Mammary epithelial cell (primary cell): ENCODE measurements at regions of chr2 and their contacts with region 1.

Region 1: GRCh38 chr2:40760071-40760666 is 308.3 kb upstream of the SLC8A1 start:
- DNase-seq: peak; percentile 39
- H3K4me3 ChIP-seq: no peak overlapping the region
- H3K27ac ChIP-seq: no peak overlapping the region
- H3K4me1 ChIP-seq: peaks cover 7% of the 10 kb centered on the region
- H3K27me3 ChIP-seq: no peaks in the 10 kb centered on the region
- CTCF ChIP-seq: peak; percentile 97 to 99

Region 2: GRCh38 chr2:40168041-40168442 is 592.1 kb before region 1 on chr2:
- CTCF ChIA-PET with region 1: no interaction called
- dilution Hi-C with region 1: no loop called
- in situ Hi-C with region 1: no loop called
- intact Hi-C with region 1: no loop called
- DNase-seq: no peak
- H3K4me3 ChIP-seq: no peak overlapping the region
- H3K27ac ChIP-seq: no peak overlapping the region
- H3K4me1 ChIP-seq: no peaks in the 10 kb centered on the region
- H3K27me3 ChIP-seq: no peaks in the 10 kb centered on the region
- CTCF ChIP-seq: no peak

Region 3: DNA sequence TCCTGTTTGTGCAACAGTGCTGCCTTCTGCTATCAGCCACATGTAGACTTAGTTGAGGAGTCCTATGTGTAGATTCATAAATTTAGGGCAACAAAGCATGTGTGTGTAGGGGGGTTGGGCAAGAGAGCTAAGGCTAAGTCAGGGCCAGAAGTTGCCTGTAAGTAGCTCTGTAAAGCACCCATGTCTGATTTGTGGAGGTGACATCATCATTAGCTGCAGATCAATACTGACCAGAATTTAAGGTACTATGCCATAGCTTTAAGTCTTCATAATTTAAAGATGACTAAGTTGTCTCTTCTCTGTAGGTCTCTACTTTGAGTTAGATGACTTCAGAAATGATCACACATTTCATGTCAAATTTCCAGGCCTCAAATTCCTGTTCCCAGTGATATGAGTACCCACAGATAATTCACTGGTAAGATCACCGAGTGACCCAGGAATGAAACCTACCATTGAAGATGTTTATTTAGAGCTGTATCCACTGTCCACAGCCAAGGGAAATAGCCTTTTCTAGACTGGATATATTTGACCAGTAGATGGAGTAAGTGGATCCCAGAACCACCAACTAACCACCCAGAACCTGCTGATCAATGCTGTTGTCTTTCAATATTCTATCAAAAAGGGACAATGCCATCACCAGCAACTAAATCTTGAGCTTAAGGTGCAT is 547.2 kb before region 1 on chr2:
- CTCF ChIA-PET with region 1: no interaction called
- dilution Hi-C with region 1: no loop called
- in situ Hi-C with region 1: loop called in 1 of 2 experiments (anchors 25 kb)
- intact Hi-C with region 1: loop called (anchors 10 kb)
- DNase-seq: no peak
- H3K4me3 ChIP-seq: no peak overlapping the region
- H3K27ac ChIP-seq: no peak overlapping the region
- H3K4me1 ChIP-seq: no peaks in the 10 kb centered on the region
- H3K27me3 ChIP-seq: no peaks in the 10 kb centered on the region
- CTCF ChIP-seq: peak; percentile 27 to 53

Region 4: DNA sequence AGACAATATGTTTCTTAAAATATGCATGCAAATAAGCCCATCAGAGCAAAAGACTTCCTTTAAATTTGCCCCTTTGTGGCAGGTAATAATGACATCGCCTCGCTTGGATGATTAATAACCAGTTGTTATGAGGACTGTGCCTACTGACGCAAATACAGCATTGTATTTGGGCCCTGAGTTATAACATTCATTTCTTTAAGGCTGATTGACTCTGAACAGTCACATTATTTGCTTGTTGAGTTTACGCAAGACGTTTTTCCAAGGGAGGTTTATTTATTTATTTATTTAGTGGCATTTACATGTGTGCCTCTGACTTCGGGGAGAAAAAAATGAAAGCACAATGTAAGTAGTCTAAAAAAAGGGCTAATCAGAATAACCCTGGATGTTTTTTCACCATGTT is 396.5 kb before region 1 on chr2:
- CTCF ChIA-PET with region 1: no interaction called
- dilution Hi-C with region 1: no loop called
- in situ Hi-C with region 1: no loop called
- intact Hi-C with region 1: loop called (anchors 5 kb)
- DNase-seq: no peak
- H3K4me3 ChIP-seq: no peak overlapping the region
- H3K27ac ChIP-seq: peak overlapping the region; percentile 51
- H3K4me1 ChIP-seq: peaks cover 13% of the 10 kb centered on the region
- H3K27me3 ChIP-seq: no peaks in the 10 kb centered on the region
- CTCF ChIP-seq: no peak

Region 5: DNA sequence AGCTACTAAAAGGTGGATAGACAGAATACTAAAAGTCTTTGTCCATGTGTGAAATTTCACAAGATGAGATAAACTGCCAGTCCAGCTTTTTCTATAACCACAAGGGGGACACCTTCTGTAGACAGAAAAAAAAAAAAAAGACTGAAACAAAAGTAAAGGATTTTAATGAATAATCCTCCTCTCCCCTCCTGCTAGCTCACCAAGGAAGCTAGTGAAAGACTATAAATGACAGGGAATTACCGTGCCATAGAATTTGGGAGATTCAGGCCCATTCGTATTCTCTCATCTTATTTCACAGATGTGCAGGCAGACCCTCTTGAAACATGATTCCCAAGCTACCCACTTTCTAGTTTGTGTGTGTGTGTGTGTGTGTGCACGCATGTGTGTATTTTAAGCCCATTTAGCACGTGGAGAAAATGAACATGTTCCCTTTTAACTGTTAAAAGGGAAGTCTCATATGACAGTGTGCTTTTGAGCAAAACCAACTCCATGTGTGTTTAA is 272.0 kb before region 1 on chr2:
- CTCF ChIA-PET with region 1: no interaction called
- dilution Hi-C with region 1: no loop called
- in situ Hi-C with region 1: no loop called
- intact Hi-C with region 1: loop called (anchors 1 kb)
- DNase-seq: peak; percentile 6
- H3K4me3 ChIP-seq: no peak overlapping the region
- H3K27ac ChIP-seq: no peak overlapping the region
- H3K4me1 ChIP-seq: no peaks in the 10 kb centered on the region
- H3K27me3 ChIP-seq: no peaks in the 10 kb centered on the region
- CTCF ChIP-seq: peak; percentile 48 to 58

Region 6: DNA sequence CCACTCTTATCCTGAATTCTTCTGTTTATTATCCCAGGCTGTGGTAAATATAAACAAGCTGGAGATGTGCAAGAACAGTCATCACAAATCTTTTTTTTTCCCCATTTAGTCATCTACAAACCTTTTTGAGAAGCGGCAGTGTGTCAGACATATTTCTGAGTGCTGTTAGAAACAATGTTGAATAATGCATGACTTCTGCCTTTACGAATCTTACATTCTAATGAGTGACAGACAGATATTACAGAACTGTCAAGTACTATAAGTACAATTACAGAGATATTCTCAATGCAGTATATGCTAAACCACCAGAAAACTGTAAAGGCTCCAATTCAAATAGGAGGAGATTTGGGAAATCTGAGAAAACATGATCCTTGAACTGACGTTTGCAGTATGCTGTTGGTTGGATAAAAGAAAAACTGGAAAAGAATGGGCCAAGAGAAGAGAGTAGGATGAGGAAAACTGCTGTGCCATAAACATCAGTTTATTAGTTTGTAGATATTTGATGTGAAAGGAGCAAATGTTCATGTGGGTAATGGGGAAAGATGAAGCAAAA is 71.2 kb after region 1 on chr2:
- CTCF ChIA-PET with region 1: no interaction called
- dilution Hi-C with region 1: no loop called
- in situ Hi-C with region 1: no loop called
- intact Hi-C with region 1: no loop called
- DNase-seq: no peak
- H3K4me3 ChIP-seq: no peak overlapping the region
- H3K27ac ChIP-seq: no peak overlapping the region
- H3K4me1 ChIP-seq: no peaks in the 10 kb centered on the region
- H3K27me3 ChIP-seq: no peaks in the 10 kb centered on the region
- CTCF ChIP-seq: no peak